ENCODE measurements at regions of chr7 and their contacts with region 1.

Region 1: DNA sequence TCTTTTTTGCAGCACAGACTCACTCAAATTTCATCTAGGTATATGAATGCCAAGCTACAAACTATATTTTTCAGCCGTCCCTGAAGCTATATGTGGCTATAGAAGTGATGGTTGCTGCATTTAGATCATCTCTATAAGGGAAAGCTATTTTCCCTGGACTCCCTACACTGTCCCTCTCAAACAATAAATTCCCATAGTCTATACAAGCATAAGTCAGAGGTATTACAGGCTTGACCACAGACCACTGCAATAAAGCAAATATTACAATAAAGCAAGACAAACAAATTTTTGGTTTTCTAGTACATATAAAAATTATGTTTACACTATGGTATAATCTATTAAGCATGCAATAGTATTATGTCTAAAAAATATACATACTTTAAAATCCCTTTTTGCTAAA is 1015.5 kb upstream of the LRRN3 start:
- DNase-seq: no peak
- H3K4me3 Mint-ChIP-seq: no peak overlapping the region
- H3K27ac Mint-ChIP-seq: no peak overlapping the region
- H3K4me1 Mint-ChIP-seq: no peaks in the 10 kb centered on the region
- H3K27me3 Mint-ChIP-seq: no peaks in the 10 kb centered on the region
- CTCF ChIP-seq: no peak

Region 2: GRCh38 chr7:110119883-110120581 is 44.6 kb after region 1 on chr7:
- CTCF ChIA-PET with region 1: no interaction called
- POLR2A ChIA-PET with region 1: no interaction called
- intact Hi-C with region 1: loop called (anchors 5 kb)
- DNase-seq: peak; percentile 49
- H3K4me3 Mint-ChIP-seq: no peak overlapping the region
- H3K27ac Mint-ChIP-seq: no peak overlapping the region
- H3K4me1 Mint-ChIP-seq: no peaks in the 10 kb centered on the region
- H3K27me3 Mint-ChIP-seq: no peaks in the 10 kb centered on the region
- CTCF ChIP-seq: no peak

Measured in MCF 10A (cell line).